A673 (cell line): ENCODE measurements at regions of chr14 and their contacts with region 1.

Region 1: DNA sequence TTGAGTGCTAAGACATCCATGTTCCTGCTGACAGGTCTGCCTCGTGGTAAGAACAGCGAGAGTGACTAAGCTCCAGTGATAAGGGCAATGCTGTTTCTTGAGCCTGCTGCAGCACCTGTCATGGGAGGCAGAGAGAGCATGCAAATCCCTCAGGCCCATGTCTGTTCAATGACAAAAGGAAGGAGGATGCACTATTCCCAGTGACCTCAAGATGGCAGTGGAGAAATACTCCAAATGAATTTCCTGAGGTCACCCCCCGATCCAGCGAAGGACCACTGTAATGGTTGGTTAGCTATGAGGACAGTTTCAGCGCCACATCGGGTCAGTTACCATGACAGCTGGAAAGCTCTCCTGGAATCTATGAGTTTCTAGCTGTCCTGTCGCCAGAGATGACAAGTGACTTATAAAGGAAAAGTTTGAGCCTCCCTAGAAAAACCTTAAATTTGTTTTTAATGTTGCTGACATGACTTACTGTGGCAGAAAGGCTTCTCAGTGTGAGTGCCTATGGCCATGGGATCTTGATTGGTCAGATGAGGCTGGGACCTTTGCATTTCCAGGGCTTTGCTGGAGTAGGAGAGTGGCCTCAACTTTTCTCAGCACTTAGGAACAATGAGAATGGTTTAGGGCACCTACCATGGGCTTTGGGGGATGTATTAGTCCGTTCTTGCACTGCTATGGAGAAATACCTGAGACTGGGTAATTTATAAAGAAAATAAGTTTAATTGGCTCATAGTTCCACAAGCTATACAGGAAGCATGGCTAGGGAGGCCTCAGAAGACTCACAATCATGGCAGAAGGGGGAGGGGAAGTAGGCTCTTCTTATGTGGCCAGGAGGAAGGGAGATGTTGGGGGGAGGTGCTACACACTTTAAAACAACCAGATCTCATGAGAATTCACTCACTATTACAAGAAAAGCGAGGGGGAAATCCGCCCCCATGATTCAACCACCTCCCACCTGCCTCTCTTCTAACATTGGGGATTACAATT is 88.0 kb upstream of the TMEM260 start:
- DNase-seq: peak; percentile 90
- H3K4me3 ChIP-seq: no peak overlapping the region
- H3K27ac ChIP-seq: no peak overlapping the region
- H3K4me1 ChIP-seq: peaks cover 33% of the 10 kb centered on the region
- H3K27me3 ChIP-seq: no peaks in the 10 kb centered on the region
- CTCF ChIP-seq: peak; percentile 85

Region 2: DNA sequence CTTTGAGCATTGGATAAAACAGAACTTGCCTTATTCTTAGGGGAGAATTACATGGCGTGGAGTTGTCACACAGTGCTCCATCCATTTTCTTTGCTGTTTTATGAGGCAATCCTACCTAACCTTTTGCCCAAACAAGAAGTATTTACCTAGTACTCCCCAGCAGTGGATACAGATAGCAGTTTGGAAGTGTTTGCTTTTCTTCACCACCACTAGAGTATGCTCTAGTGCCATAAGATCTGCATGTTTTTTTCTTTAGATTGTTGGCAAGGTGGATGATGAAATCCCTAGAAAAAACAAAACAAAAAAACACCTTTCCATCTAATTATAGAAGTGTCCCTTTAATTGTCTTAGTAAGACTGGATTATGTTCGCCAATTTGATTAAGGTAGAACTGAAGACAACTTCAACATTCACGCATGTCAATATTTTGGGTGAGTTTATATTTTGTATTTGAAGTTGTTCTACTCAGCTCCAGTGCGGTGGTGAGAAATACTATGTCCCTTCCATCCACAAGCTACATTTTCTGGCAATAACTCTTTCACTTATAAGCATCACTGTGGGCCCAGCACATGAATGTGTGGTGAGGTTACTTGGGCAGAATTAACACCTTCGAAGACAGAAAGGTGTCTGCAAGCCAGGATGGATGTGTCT is 64.5 kb after region 1 on chr14:
- CTCF ChIA-PET with region 1: interaction called, 26 read pairs
- POLR2A ChIA-PET with region 1: no interaction called
- intact Hi-C with region 1: loop called (anchors 1 kb)
- DNase-seq: peak; percentile 81
- H3K4me3 ChIP-seq: no peak overlapping the region
- H3K27ac ChIP-seq: peak overlapping the region; percentile 48
- H3K4me1 ChIP-seq: peaks cover 44% of the 10 kb centered on the region
- H3K27me3 ChIP-seq: no peaks in the 10 kb centered on the region
- CTCF ChIP-seq: peak; percentile 85

Region 3: GRCh38 chr14:56650048-56650447 is 158.5 kb after region 1 on chr14:
- CTCF ChIA-PET with region 1: no interaction called
- POLR2A ChIA-PET with region 1: no interaction called
- intact Hi-C with region 1: loop called (anchors 5 kb)
- DNase-seq: no peak
- H3K4me3 ChIP-seq: no peak overlapping the region
- H3K27ac ChIP-seq: no peak overlapping the region
- H3K4me1 ChIP-seq: peaks cover 22% of the 10 kb centered on the region
- H3K27me3 ChIP-seq: no peaks in the 10 kb centered on the region
- CTCF ChIP-seq: no peak

Region 4: GRCh38 chr14:57066887-57067513 is 575.4 kb after region 1 on chr14:
- CTCF ChIA-PET with region 1: no interaction called
- POLR2A ChIA-PET with region 1: no interaction called
- intact Hi-C with region 1: loop called (anchors 5 kb)
- DNase-seq: peak; percentile 94
- H3K4me3 ChIP-seq: peak overlapping the region; percentile 3
- H3K27ac ChIP-seq: peak overlapping the region; percentile 75
- H3K4me1 ChIP-seq: peaks cover 86% of the 10 kb centered on the region
- H3K27me3 ChIP-seq: no peaks in the 10 kb centered on the region
- CTCF ChIP-seq: peak; percentile 96

Region 5: DNA sequence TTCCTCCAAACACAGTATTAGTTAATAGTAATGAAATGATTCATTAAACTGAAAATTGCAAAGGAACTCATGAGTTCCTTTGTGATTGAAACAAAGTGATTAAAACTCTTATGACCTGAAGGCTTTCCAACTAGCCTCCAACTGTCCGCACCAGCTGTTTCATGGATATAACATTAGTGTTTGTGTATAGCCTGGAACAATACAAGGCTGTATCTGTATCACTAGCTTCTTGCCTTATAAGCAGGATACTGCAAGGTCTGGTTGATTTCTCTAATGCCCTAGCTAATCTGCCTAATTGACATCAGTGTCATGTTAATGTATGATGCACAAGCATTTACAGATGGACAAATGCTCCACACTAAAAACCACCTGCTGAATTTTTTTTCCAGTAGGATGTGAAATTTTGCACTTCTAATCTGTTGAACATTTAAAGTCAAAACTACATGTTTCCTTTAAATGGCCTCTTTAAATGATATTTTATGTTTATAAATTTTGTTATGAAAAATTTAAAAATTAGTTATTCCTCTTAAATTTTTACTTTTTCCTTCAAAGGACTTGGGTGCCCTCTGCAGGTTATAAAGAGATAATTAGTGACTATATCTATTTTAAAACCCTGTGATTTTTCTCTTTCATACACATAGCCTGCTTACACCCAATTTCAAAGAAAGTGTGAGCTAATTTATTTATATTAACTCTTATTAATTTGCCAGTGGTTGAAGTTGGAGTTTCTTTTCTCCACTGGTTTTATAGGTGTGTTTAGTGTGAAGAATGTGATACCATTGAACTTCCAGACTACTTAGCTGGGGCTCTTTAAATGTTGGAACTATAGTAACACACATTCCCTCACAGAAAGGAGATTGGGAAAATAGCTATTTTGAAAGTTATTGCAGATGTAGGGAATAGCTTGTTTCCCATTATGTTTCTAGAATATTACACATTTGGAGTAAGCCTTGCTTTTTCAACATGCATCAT is 802.6 kb after region 1 on chr14:
- CTCF ChIA-PET with region 1: interaction called, 3 read pairs
- POLR2A ChIA-PET with region 1: no interaction called
- intact Hi-C with region 1: loop called (anchors 5 kb)
- DNase-seq: peak; percentile 33
- H3K4me3 ChIP-seq: no peak overlapping the region
- H3K27ac ChIP-seq: no peak overlapping the region
- H3K4me1 ChIP-seq: peaks cover 4% of the 10 kb centered on the region
- H3K27me3 ChIP-seq: no peaks in the 10 kb centered on the region
- CTCF ChIP-seq: peak; percentile 59

Region 6: GRCh38 chr14:57378669-57379068 is 887.1 kb after region 1 on chr14:
- CTCF ChIA-PET with region 1: no interaction called
- POLR2A ChIA-PET with region 1: no interaction called
- intact Hi-C with region 1: loop called (anchors 2 kb)
- DNase-seq: peak; percentile 27
- H3K4me3 ChIP-seq: no peak overlapping the region
- H3K27ac ChIP-seq: no peak overlapping the region
- H3K4me1 ChIP-seq: peaks cover 14% of the 10 kb centered on the region
- H3K27me3 ChIP-seq: no peaks in the 10 kb centered on the region
- CTCF ChIP-seq: peak; percentile 49; the same call in 1 of the 2 replicates